Right lobe of liver (tissue), 6 donors: ENCODE measurements at regions of chr3 and their contacts with region 1.

Region 1: GRCh38 chr3:66816090-66816761 is 181.9 kb upstream of the KBTBD8 start:
- DNase-seq: no peak
- ATAC-seq: peak; percentile 66 to 79 (median 72)
- H3K4me3 ChIP-seq: no peak overlapping the region
- H3K27ac ChIP-seq: no peak overlapping the region
- H3K4me1 ChIP-seq: peaks cover 0 to 43% (median 11%) of the 10 kb centered on the region in 4 donors
- H3K27me3 ChIP-seq: no peaks in the 10 kb centered on the region
- CTCF ChIP-seq: peak; percentile 59 to 66 (median 60)
- POLR2A ChIP-seq: no peak

Region 2: GRCh38 chr3:66253790-66254620 is 562.2 kb before region 1 on chr3:
- intact Hi-C with region 1: loop called in 1 of 2 experiments (anchors 10 kb)
- DNase-seq: no peak
- ATAC-seq: peak in 3 of 4 donors; percentile 43 to 69 (median 59)
- H3K4me3 ChIP-seq: no peak overlapping the region
- H3K27ac ChIP-seq: no peak overlapping the region
- H3K4me1 ChIP-seq: no peaks in the 10 kb centered on the region
- H3K27me3 ChIP-seq: no peaks in the 10 kb centered on the region
- CTCF ChIP-seq: peak; percentile 74 to 82 (median 76)
- POLR2A ChIP-seq: no peak

Region 3: GRCh38 chr3:66407611-66408218 is 408.5 kb before region 1 on chr3:
- intact Hi-C with region 1: loop called (anchors 5 kb)
- DNase-seq: peak; percentile 69 to 78 (median 78)
- ATAC-seq: peak; percentile 77 to 90 (median 84)
- H3K4me3 ChIP-seq: no peak overlapping the region
- H3K27ac ChIP-seq: no peak overlapping the region
- H3K4me1 ChIP-seq: peaks cover 2 to 39% (median 8%) of the 10 kb centered on the region in 4 donors
- H3K27me3 ChIP-seq: no peaks in the 10 kb centered on the region
- CTCF ChIP-seq: peak; percentile 87 to 96 (median 91)
- POLR2A ChIP-seq: no peak

Region 4: GRCh38 chr3:66413151-66413751 is 403.0 kb before region 1 on chr3:
- intact Hi-C with region 1: loop called (anchors 5 kb)
- DNase-seq: no peak
- ATAC-seq: no peak
- H3K4me3 ChIP-seq: no peak overlapping the region
- H3K27ac ChIP-seq: no peak overlapping the region
- H3K4me1 ChIP-seq: no peaks in the 10 kb centered on the region
- H3K27me3 ChIP-seq: no peaks in the 10 kb centered on the region
- CTCF ChIP-seq: no peak
- POLR2A ChIP-seq: no peak

Region 5: GRCh38 chr3:66665021-66665695 is 151.1 kb before region 1 on chr3:
- intact Hi-C with region 1: no loop called
- DNase-seq: no peak
- ATAC-seq: no peak
- H3K4me3 ChIP-seq: no peak overlapping the region
- H3K27ac ChIP-seq: no peak overlapping the region
- H3K4me1 ChIP-seq: no peaks in the 10 kb centered on the region
- H3K27me3 ChIP-seq: no peaks in the 10 kb centered on the region
- CTCF ChIP-seq: no peak
- POLR2A ChIP-seq: no peak